HCT116 (cell line): ENCODE measurements at regions of chr2 and their contacts with region 1.

Region 1: DNA sequence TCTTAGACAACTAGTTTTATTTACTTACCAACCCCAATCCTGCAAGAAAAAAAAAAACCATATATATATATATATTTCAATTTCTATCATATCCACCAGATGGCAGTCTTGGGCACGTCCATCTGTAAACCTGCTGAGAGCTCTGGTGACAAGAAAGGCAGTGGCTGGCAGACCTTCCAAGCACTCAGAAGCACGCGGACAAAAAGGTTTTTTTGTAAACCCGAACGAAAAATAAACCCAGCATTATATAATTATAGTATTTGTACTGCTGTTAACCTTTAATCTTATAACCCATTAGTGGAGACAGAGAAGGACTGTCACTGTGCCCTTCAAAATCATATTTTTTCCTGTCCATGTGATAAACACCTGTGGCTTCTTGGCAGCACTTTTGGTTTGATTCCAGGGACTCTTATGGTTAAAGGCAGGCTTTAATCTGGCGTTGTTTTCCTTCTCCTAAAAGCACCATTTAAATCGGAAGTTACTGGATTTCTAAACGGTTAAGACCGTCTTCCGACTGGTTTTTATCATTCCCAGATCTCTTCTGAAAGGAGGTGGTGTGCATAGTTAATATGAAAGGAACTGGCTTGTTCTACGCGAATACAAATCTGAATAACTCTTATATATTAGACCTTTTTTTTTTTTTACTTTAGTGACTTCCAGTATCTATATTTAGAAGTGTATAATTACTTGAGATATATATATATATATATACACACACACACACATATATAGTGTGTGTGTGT is 31.0 kb upstream of the SLC3A1 start:
- DNase-seq: peak; percentile 44
- ATAC-seq: peak; percentile 76
- H3K4me3 ChIP-seq: no peak overlapping the region
- H3K27ac ChIP-seq: no peak overlapping the region
- H3K4me1 ChIP-seq: peaks cover 0 to 4% of the 10 kb centered on the region in 2 experiments; a peak in 2 of 4 replicates
- H3K27me3 ChIP-seq: no peaks in the 10 kb centered on the region
- CTCF ChIP-seq: peak; percentile 37 to 69 (median 44); a peak in 4 of 6 replicates
- POLR2A ChIP-seq: no peak
- RAD21 ChIP-seq: peak; percentile 55

Region 2: GRCh38 chr2:43958397-43959275 is 285.7 kb before region 1 on chr2:
- CTCF ChIA-PET with region 1: no interaction called
- POLR2A ChIA-PET with region 1: no interaction called
- RAD21 ChIA-PET with region 1: no interaction called
- intact Hi-C with region 1: no loop called
- DNase-seq: no peak
- ATAC-seq: no peak
- H3K4me3 ChIP-seq: no peak overlapping the region
- H3K27ac ChIP-seq: no peak overlapping the region
- H3K4me1 ChIP-seq: no peaks in the 10 kb centered on the region
- H3K27me3 ChIP-seq: no peaks in the 10 kb centered on the region
- CTCF ChIP-seq: no peak
- POLR2A ChIP-seq: no peak
- RAD21 ChIP-seq: no peak

Region 3: DNA sequence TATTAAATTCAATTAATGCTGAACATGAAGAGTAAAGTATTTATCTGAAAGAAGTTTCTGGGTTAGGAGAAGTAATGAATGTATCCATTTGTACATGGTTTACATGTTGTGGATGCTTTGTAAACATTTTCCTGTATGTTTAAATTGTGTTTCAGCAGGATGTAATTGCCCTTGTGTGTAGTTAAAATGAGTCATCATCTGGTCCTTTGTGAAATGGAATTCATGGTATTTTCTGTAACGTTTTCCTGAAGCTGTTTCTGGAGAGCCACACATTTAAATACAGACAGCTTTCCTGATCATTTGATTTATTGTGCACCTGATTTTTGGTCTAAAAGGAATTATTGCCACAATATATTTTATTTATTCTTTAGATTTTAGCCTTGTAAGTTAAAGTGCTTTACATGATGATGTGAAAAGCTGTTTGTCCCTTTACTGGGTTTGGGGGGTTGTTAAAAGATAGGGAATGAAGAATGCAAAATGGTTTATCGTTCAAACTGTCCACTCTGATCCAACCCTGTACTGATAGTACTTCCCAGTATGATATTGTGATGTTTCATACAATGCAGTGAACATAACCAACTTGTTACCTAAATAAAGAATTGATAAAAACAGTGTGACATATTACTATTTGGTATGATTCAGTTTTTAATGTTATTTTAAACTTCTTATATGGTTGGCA is 10.7 kb before region 1 on chr2:
- CTCF ChIA-PET with region 1: interaction called, 29 read pairs
- POLR2A ChIA-PET with region 1: no interaction called
- RAD21 ChIA-PET with region 1: no interaction called
- intact Hi-C with region 1: no loop called
- DNase-seq: no peak
- ATAC-seq: peak; percentile 67
- H3K4me3 ChIP-seq: no peak overlapping the region
- H3K27ac ChIP-seq: no peak overlapping the region; the same call in 1 of the 2 replicates
- H3K4me1 ChIP-seq: peaks cover 11 to 17% of the 10 kb centered on the region in 2 experiments
- H3K27me3 ChIP-seq: no peaks in the 10 kb centered on the region
- CTCF ChIP-seq: no peak
- POLR2A ChIP-seq: no peak
- RAD21 ChIP-seq: no peak

Region 4: GRCh38 chr2:44291281-44292248 is 47.3 kb after region 1 on chr2:
- CTCF ChIA-PET with region 1: interaction called, 8 read pairs
- POLR2A ChIA-PET with region 1: no interaction called
- RAD21 ChIA-PET with region 1: interaction called, 3 to 4 read pairs
- intact Hi-C with region 1: loop called (anchors 1 kb)
- DNase-seq: peak; percentile 48
- ATAC-seq: peak; percentile 96
- H3K4me3 ChIP-seq: no peak overlapping the region
- H3K27ac ChIP-seq: no peak overlapping the region
- H3K4me1 ChIP-seq: peaks cover 10 to 17% of the 10 kb centered on the region in 2 experiments
- H3K27me3 ChIP-seq: no peaks in the 10 kb centered on the region
- CTCF ChIP-seq: peak; percentile 65 to 88 (median 69)
- POLR2A ChIP-seq: no peak
- RAD21 ChIP-seq: peak; percentile 90

Region 5: GRCh38 chr2:44342854-44343253 is 98.6 kb after region 1 on chr2:
- CTCF ChIA-PET with region 1: no interaction called
- POLR2A ChIA-PET with region 1: no interaction called
- RAD21 ChIA-PET with region 1: no interaction called
- intact Hi-C with region 1: loop called (anchors 5 kb)
- DNase-seq: no peak
- ATAC-seq: peak; percentile 77
- H3K4me3 ChIP-seq: no peak overlapping the region
- H3K27ac ChIP-seq: no peak overlapping the region
- H3K4me1 ChIP-seq: no peaks in the 10 kb centered on the region
- H3K27me3 ChIP-seq: no peaks in the 10 kb centered on the region
- CTCF ChIP-seq: peak; percentile 24 to 62 (median 33); a peak in 3 of 6 replicates
- POLR2A ChIP-seq: no peak
- RAD21 ChIP-seq: peak; percentile 51

Region 6: GRCh38 chr2:44686561-44686960 is 442.3 kb after region 1 on chr2:
- CTCF ChIA-PET with region 1: no interaction called
- POLR2A ChIA-PET with region 1: no interaction called
- RAD21 ChIA-PET with region 1: no interaction called
- intact Hi-C with region 1: no loop called
- DNase-seq: peak; percentile 3
- ATAC-seq: no peak
- H3K4me3 ChIP-seq: no peak overlapping the region
- H3K27ac ChIP-seq: no peak overlapping the region
- H3K4me1 ChIP-seq: 0 out of 4 replicates have a peak, but pooled peaks cover 0 to 4% of the 10 kb centered on the region in 2 experiments
- H3K27me3 ChIP-seq: no peaks in the 10 kb centered on the region
- CTCF ChIP-seq: no peak
- POLR2A ChIP-seq: no peak
- RAD21 ChIP-seq: no peak